ENCODE measurements at regions of chr12 and their contacts with region 1.

Region 1: GRCh38 chr12:93419388-93420034 is 22.2 kb downstream of the UBE2N start:
- DNase-seq: no peak
- H3K4me3 Mint-ChIP-seq: no peak overlapping the region
- H3K27ac Mint-ChIP-seq: no peak overlapping the region
- H3K4me1 Mint-ChIP-seq: peaks cover 85% of the 10 kb centered on the region
- H3K27me3 Mint-ChIP-seq: no peaks in the 10 kb centered on the region

Region 2: DNA sequence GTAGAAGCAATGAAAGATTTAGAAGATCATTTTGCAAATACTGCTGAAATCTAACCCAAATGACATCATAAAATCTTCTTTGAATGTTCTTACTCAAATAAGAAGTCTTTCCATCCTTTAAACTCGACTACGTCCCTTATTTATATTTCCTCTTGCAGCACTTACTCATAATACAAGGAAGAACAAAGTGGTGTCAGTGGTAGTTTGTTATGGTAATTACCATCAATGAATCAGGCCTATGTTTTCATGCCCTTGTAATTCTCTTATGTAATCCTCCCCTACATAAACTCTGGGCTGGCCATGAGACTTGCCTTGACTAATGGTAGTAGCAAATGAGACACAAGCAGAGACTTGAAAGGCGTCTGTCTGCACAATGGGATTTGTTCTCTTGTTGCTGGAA is 507.5 kb before region 1 on chr12:
- CTCF ChIA-PET with region 1: no interaction called
- POLR2A ChIA-PET with region 1: interaction called, 3 read pairs
- intact Hi-C with region 1: loop called (anchors 5 kb)
- DNase-seq: no peak
- H3K4me3 Mint-ChIP-seq: no peak overlapping the region
- H3K27ac Mint-ChIP-seq: peak overlapping the region; percentile 9
- H3K4me1 Mint-ChIP-seq: peaks cover 48% of the 10 kb centered on the region
- H3K27me3 Mint-ChIP-seq: no peaks in the 10 kb centered on the region

Region 3: GRCh38 chr12:93098077-93098476 is 321.4 kb before region 1 on chr12:
- CTCF ChIA-PET with region 1: interaction called, 13 read pairs
- POLR2A ChIA-PET with region 1: no interaction called
- intact Hi-C with region 1: loop called (anchors 2 kb)
- DNase-seq: peak; percentile 75
- H3K4me3 Mint-ChIP-seq: no peak overlapping the region
- H3K27ac Mint-ChIP-seq: no peak overlapping the region
- H3K4me1 Mint-ChIP-seq: peaks cover 9% of the 10 kb centered on the region
- H3K27me3 Mint-ChIP-seq: no peaks in the 10 kb centered on the region

Region 4: GRCh38 chr12:93387780-93388179 is 31.7 kb before region 1 on chr12:
- CTCF ChIA-PET with region 1: interaction called, 23 read pairs
- POLR2A ChIA-PET with region 1: interaction called, 3 read pairs
- intact Hi-C with region 1: loop called (anchors 2 kb)
- DNase-seq: peak; percentile 83
- H3K4me3 Mint-ChIP-seq: no peak overlapping the region
- H3K27ac Mint-ChIP-seq: peak overlapping the region; percentile 67
- H3K4me1 Mint-ChIP-seq: peaks cover 62% of the 10 kb centered on the region
- H3K27me3 Mint-ChIP-seq: no peaks in the 10 kb centered on the region

Region 5: GRCh38 chr12:93403988-93404803 is 15.3 kb before region 1 on chr12:
- CTCF ChIA-PET with region 1: interaction called, 43 read pairs
- POLR2A ChIA-PET with region 1: interaction called, 8 read pairs
- intact Hi-C with region 1: loop called (anchors 1 kb)
- DNase-seq: no peak
- H3K4me3 Mint-ChIP-seq: no peak overlapping the region
- H3K27ac Mint-ChIP-seq: peak overlapping the region; percentile 36
- H3K4me1 Mint-ChIP-seq: peaks cover 44% of the 10 kb centered on the region
- H3K27me3 Mint-ChIP-seq: no peaks in the 10 kb centered on the region

Region 6: GRCh38 chr12:93467351-93468007 is 48.0 kb after region 1 on chr12 and contains the start of gene MRPL42:
- CTCF ChIA-PET with region 1: interaction called, 11 read pairs
- POLR2A ChIA-PET with region 1: no interaction called
- intact Hi-C with region 1: no loop called
- DNase-seq: peak; percentile 95
- H3K4me3 Mint-ChIP-seq: peak within 1 kb of the TSS; percentile 93
- H3K27ac Mint-ChIP-seq: peak within 1 kb of the TSS; percentile 88
- H3K4me1 Mint-ChIP-seq: peaks cover 29% of the 10 kb centered on the region
- H3K27me3 Mint-ChIP-seq: no peaks in the 10 kb centered on the region
- total RNA-seq, gene MRPL42: 65.0 to 67.6 TPM

Region 7: GRCh38 chr12:93638095-93638494 is 218.6 kb after region 1 on chr12:
- CTCF ChIA-PET with region 1: no interaction called
- POLR2A ChIA-PET with region 1: no interaction called
- intact Hi-C with region 1: no loop called
- DNase-seq: no peak
- H3K4me3 Mint-ChIP-seq: no peak overlapping the region
- H3K27ac Mint-ChIP-seq: no peak overlapping the region
- H3K4me1 Mint-ChIP-seq: no peaks in the 10 kb centered on the region
- H3K27me3 Mint-ChIP-seq: peaks cover 18% of the 10 kb centered on the region

Measured in activated CD4-positive, alpha-beta memory T cell treated with anti-CD3 and anti-CD28 coated beads for 36 hours (primary cell).